A549 (cell line): ENCODE measurements at regions of chr1 and their contacts with region 1.

Region 1: GRCh38 chr1:156910309-156910782 is 10.1 kb upstream of the LRRC71 start:
- DNase-seq: peak; percentile 43 to 66
- ATAC-seq: peak; percentile 52 to 78; a peak in 4 of 6 replicates
- H3K4me3 ChIP-seq: no peak overlapping the region
- H3K27ac ChIP-seq: peak overlapping the region in 1 of 2 experiments; percentile 52; a peak in 2 of 6 replicates
- H3K4me1 ChIP-seq: peaks cover 20% of the 10 kb centered on the region
- CTCF ChIP-seq: peak; percentile 83
- EP300 ChIP-seq: no peak
- POLR2A ChIP-seq: no peak
- RAD21 ChIP-seq: peak; percentile 37 to 50; a peak in 4 of 5 replicates

Region 2: DNA sequence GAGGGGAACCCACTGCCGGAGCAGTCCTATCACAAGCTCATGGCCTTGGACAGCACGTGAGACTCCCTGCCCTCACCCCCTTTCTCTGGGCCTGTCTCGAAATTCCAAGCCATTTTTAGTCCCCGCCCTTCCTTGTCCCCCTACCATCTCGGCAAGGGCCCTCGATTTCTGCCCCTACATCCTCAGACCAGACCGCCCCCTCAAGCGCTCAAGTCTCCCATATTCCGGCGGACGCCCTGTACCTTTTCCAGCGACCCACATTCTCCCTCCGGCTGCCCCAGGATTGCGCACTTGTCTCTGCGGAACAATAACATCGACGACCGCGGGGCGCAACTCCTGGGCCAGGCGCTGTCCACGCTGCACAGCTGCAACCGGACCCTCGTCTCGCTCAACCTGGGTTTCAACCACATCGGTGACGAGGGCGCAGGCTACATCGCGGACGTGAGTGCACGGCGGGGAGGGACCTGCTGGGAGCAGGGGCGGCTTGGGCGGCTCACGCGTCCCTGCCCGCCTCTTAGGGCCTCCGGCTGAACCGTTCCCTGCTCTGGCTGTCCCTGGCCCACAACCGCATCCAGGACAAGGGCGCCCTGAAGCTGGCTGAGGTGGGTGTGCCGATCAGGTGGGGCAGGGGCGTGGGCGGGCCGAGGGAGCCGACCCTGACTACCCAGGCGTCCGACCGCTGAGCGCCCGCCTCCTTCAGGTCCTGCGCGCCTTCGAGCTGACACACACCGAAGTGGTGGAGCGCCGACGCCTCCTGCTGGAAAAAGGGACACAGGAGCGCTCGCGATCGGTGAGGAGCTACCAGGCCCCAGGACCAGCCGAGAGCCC is 17.1 kb after region 1 on chr1:
- CTCF ChIA-PET with region 1: interaction called, 89 read pairs
- POLR2A ChIA-PET with region 1: no interaction called
- DNase-seq: peak; percentile 84 to 87
- ATAC-seq: peak; percentile 85 to 94
- H3K4me3 ChIP-seq: peak overlapping the region; percentile 46
- H3K27ac ChIP-seq: peak overlapping the region; percentile 61 to 82; a peak in 5 of 6 replicates
- H3K4me1 ChIP-seq: peaks cover 7% of the 10 kb centered on the region; the same call in 1 of the 3 replicates
- CTCF ChIP-seq: peak; percentile 82
- EP300 ChIP-seq: no peak
- POLR2A ChIP-seq: no peak
- RAD21 ChIP-seq: peak; percentile 90 to 92